Dendritic cell treated with granulocyte-macrophage colony-stimulating factor and Interleukin-4, amounts not matched to agents 40 ng/mL and 50 ng/mL, for 4 days (primary cell): ENCODE measurements at regions of chr18 and their contacts with region 1.

Region 1: DNA sequence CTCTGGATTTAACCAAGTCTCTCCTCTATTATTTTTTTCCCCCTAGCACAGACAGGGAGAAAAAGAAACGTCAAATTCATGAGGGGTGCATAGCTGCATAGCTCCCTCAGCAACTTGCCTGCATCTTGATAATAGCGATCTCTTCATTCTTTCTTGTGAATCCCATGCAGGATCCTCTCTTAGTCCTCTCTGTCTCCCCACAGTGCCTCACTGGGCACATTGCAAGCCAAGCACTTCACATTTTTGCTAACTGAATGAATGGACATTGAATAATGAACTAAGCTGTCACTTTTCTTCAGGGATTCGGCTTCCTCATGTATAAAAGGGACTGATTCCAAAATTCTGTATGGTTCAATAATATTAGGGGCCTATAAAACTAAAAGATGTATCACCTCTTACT is 2.9 kb upstream of the EPB41L3 start:
- H3K4me3 Mint-ChIP-seq: no peak overlapping the region
- H3K27ac Mint-ChIP-seq: no peak overlapping the region
- H3K4me1 Mint-ChIP-seq: peaks cover 23% of the 10 kb centered on the region
- H3K27me3 Mint-ChIP-seq: peaks cover 5% of the 10 kb centered on the region

Region 2: GRCh38 chr18:5237723-5238370 is 308.8 kb before region 1 on chr18:
- intact Hi-C with region 1: loop called (anchors 10 kb)
- H3K4me3 Mint-ChIP-seq: peak overlapping the region; percentile 96
- H3K27ac Mint-ChIP-seq: peak overlapping the region; percentile 100
- H3K4me1 Mint-ChIP-seq: peaks cover 23% of the 10 kb centered on the region
- H3K27me3 Mint-ChIP-seq: peaks cover 12% of the 10 kb centered on the region

Region 3: GRCh38 chr18:5424903-5425664 is 121.6 kb before region 1 on chr18:
- intact Hi-C with region 1: loop called (anchors 1 kb)
- H3K4me3 Mint-ChIP-seq: no peak overlapping the region
- H3K27ac Mint-ChIP-seq: no peak overlapping the region
- H3K4me1 Mint-ChIP-seq: peaks cover 28% of the 10 kb centered on the region
- H3K27me3 Mint-ChIP-seq: no peaks in the 10 kb centered on the region

Region 4: GRCh38 chr18:5456577-5457463 is 89.8 kb before region 1 on chr18:
- intact Hi-C with region 1: loop called (anchors 2 kb)
- H3K4me3 Mint-ChIP-seq: no peak overlapping the region
- H3K27ac Mint-ChIP-seq: peak overlapping the region; percentile 69
- H3K4me1 Mint-ChIP-seq: peaks cover 38% of the 10 kb centered on the region
- H3K27me3 Mint-ChIP-seq: no peaks in the 10 kb centered on the region

Region 5: DNA sequence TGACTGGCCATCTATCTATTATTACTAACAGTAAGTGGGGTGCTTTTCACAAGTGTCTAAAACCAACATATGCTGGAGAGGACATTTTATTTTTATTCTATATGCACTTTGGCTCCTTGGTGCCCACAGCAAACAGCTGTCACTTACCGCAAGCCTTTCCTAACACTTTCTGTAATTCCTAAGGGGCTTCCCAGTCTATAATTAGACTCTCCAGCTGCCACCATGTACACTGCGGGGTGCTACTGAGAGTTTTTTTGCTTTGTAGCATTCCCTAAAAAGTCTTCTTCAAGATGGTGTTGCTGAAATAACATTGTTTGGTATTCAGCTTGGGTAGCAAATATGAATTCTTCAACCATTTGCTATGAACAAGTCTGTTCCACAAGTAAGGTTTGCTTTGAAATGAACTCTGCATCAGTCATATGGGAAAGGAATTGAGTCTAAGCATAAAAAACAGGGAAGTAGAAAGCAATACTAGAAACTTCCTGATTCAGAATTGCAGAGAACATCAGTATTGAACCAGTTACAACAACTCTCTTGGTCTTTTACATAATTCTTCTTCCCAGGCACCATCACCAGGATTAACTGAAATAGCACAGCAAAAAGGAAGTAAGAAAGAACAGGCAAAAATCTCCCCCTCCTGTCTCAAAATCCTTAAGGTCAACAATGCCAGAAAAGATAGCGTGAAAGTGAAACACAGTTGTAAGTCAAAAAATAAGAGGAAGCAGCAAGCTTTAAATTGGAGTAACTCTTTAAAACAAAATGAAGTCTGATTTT is 31.5 kb before region 1 on chr18:
- intact Hi-C with region 1: loop called (anchors 5 kb)
- H3K4me3 Mint-ChIP-seq: peak overlapping the region; percentile 48
- H3K27ac Mint-ChIP-seq: peak overlapping the region; percentile 82
- H3K4me1 Mint-ChIP-seq: peaks cover 63% of the 10 kb centered on the region
- H3K27me3 Mint-ChIP-seq: no peaks in the 10 kb centered on the region